Psoas muscle (tissue), 8 donors: ENCODE measurements at regions of chr16 and their contacts with region 1.

Region 1: DNA sequence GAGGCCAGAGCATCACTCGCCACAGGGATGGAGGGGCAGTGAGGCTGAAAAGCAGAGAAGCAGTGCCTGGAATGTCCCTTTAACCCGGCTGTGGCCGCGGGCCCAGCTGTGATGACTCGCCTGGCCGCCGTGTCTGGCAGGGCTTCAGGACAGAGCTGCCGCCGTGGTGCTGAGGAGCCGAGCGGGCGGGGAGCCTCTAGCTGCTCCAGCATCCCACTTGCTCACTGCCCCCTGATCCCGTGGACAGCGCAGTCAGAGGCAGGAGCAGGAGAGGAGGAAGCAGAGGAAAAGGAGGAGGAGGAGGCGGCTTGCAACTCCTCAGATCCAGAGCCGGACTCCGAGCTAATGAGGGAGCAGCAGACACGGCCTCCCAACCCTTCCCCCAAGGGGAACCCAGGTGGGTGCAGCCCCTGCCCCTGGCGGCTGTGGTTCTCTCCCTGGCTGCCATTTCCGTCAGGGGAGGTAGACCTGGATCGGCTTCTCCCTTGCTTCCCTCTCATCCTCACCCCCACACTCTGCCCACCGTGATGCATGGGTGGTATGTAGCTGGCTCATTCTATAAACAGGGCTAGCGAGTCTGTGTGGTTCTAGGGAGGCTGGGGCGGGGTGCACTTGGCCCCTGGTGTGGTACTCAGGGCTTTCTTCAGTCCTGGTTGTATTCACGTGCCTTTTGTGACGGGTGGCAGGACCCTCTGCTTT is 165.7 kb downstream of the CMIP start:
- DNase-seq: peak; percentile 85 to 87
- ATAC-seq: peak; percentile 67 to 84 (median 74)
- H3K4me3 ChIP-seq: peak overlapping the region; percentile 6
- H3K27ac ChIP-seq: no peak overlapping the region
- H3K4me1 ChIP-seq: peaks cover 11% of the 10 kb centered on the region
- H3K27me3 ChIP-seq: peaks cover 0 to 9% (median 0%) of the 10 kb centered on the region in 3 donors
- CTCF ChIP-seq: no peak

Region 2: GRCh38 chr16:81444448-81445121 is 165.7 kb before region 1 on chr16 and contains the start of gene CMIP:
- intact Hi-C with region 1: loop called in 1 of 2 experiments (anchors 5 kb)
- DNase-seq: peak; percentile 87 to 91
- ATAC-seq: peak; percentile 80 to 85 (median 83)
- H3K4me3 ChIP-seq: peak within 1 kb of the TSS; percentile 72
- H3K27ac ChIP-seq: peak within 1 kb of the TSS; percentile 38
- H3K4me1 ChIP-seq: no peaks in the 10 kb centered on the region
- H3K27me3 ChIP-seq: peaks cover 0 to 8% (median 2%) of the 10 kb centered on the region in 3 donors
- CTCF ChIP-seq: no peak
- total RNA-seq, gene CMIP: 4.1 to 8.9 (median 7.8) TPM